SK-N-SH (cell line): ENCODE measurements at regions of chr3 and their contacts with region 1.

Region 1: DNA sequence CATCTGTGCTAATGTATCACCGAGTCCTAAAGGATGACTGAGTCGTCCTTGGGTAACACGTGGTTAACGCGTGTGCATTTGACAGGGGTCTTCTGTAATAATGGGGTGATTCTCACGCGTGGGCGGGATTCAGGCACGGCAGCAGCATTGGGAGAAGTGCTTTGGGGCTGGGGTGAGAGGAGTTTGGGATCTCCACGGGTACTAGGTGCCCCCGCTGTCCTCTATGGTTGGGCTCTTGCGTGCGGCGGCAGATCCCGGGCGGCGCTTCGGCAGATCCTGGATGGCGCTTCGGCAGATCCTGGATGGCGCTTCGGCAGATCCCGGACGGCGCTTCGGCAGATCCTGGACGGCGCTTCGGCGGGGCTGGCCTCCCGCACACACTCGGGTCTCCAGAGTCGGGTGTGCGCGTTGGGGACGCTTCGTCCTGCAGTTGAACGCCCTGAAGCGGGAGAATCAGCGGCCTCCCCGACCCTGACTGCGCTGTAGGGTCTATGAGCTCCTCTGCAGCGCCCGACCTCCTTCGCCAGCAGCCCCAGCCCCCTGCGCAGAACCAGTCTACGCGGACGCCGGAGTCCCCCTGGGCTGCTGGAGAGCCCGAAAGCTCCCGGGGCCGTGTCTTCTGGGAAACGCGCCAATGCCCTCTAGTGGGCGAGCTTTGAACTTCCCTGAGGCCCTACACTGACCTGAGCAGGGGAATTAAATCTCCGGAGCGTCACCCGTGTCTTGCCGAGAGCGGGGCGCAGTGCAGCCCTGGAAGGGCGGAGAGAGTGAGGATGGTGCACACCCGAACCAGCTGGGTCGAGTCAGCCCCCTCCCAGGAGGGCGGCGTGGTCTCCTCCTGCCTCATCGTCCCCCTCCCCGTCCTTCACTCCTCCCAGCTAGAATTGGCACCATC is 48.1 kb upstream of the EPHB3 start:
- DNase-seq: peak; percentile 94
- H3K4me3 ChIP-seq: peak overlapping the region; percentile 33 to 55
- H3K27ac ChIP-seq: no peak overlapping the region
- H3K4me1 ChIP-seq: peaks cover 0 to 7% of the 10 kb centered on the region in 2 experiments; a peak in 1 of 4 replicates
- H3K27me3 ChIP-seq: peaks cover 52% of the 10 kb centered on the region
- CTCF ChIP-seq: peak; percentile 76
- EP300 ChIP-seq: no peak
- RAD21 ChIP-seq: peak; percentile 81

Region 2: GRCh38 chr3:184229394-184230080 is 284.0 kb before region 1 on chr3 and contains the start of gene VWA5B2:
- CTCF ChIA-PET with region 1: no interaction called
- POLR2A ChIA-PET with region 1: no interaction called
- DNase-seq: peak; percentile 99
- H3K4me3 ChIP-seq: peak within 1 kb of the TSS; percentile 50 to 64
- H3K27ac ChIP-seq: no peak within 1 kb of the TSS
- H3K4me1 ChIP-seq: peaks cover 0 to 26% of the 10 kb centered on the region in 2 experiments; a peak in 2 of 4 replicates
- H3K27me3 ChIP-seq: peaks cover 27% of the 10 kb centered on the region
- CTCF ChIP-seq: peak; percentile 21; the same call in 1 of the 2 replicates
- EP300 ChIP-seq: no peak
- RAD21 ChIP-seq: 0 out of 2 replicates have a peak, but pooled peaks have one; percentile 16
- polyA plus RNA-seq, gene VWA5B2: 0.08 and 0.19 TPM in 2 replicates

Region 3: DNA sequence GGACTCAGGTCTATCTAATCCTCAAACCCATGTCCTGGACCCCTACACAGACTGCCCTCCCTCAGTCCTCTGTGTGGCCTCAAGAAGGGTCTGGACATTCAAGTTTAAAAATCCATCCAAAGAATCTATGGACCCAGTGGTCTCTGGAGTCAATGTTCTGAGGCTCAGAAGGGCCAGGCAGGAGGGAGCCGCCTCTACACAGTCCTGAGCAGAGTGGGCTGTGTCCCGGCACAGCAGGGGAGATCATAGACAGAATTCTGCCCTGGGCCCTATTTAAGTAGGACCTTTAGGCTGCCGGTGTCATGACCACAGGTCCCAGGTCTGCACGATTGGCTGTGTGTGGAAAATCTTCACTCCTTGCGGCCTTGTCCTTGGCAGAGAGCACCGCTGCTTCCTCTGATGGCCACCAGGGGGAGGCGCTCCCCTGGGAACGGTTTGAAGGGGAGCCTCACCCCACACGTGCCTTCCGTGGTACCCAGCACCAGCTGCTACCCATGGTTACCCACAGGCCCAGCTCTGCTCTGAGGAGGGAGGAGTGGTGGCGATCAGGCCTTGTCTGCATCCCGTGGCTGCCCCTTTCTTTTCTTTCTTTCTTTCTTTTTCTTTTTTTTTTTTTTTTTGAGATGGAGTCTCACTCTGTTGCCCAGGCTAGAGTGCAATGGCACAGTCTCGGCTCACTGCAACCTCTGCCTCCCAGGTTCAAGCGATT is 95.8 kb before region 1 on chr3:
- CTCF ChIA-PET with region 1: interaction called, 73 read pairs
- POLR2A ChIA-PET with region 1: no interaction called
- DNase-seq: peak; percentile 85
- H3K4me3 ChIP-seq: no peak overlapping the region; a peak in 1 of 4 replicates
- H3K27ac ChIP-seq: no peak overlapping the region
- H3K4me1 ChIP-seq: no peaks in the 10 kb centered on the region; a peak in 1 of 4 replicates
- H3K27me3 ChIP-seq: no peaks in the 10 kb centered on the region
- CTCF ChIP-seq: peak; percentile 94
- EP300 ChIP-seq: no peak
- RAD21 ChIP-seq: peak; percentile 87

Region 4: GRCh38 chr3:184469423-184469822 is 44.1 kb before region 1 on chr3:
- CTCF ChIA-PET with region 1: interaction called, 85 read pairs
- POLR2A ChIA-PET with region 1: interaction called, 3 read pairs
- DNase-seq: peak; percentile 64
- H3K4me3 ChIP-seq: no peak overlapping the region
- H3K27ac ChIP-seq: no peak overlapping the region
- H3K4me1 ChIP-seq: peaks cover 0 to 7% of the 10 kb centered on the region in 2 experiments; a peak in 1 of 4 replicates
- H3K27me3 ChIP-seq: peaks cover 26% of the 10 kb centered on the region; the same call in 1 of the 2 replicates
- CTCF ChIP-seq: peak; percentile 68
- EP300 ChIP-seq: no peak
- RAD21 ChIP-seq: peak; percentile 73

Region 5: GRCh38 chr3:184491867-184492615 is 21.5 kb before region 1 on chr3:
- CTCF ChIA-PET with region 1: interaction called, 21 read pairs
- POLR2A ChIA-PET with region 1: no interaction called
- DNase-seq: no peak
- H3K4me3 ChIP-seq: no peak overlapping the region
- H3K27ac ChIP-seq: no peak overlapping the region
- H3K4me1 ChIP-seq: no peaks in the 10 kb centered on the region
- H3K27me3 ChIP-seq: peaks cover 70% of the 10 kb centered on the region
- CTCF ChIP-seq: no peak
- EP300 ChIP-seq: no peak
- RAD21 ChIP-seq: no peak

Region 6: GRCh38 chr3:184537885-184538599 is 24.5 kb after region 1 on chr3:
- CTCF ChIA-PET with region 1: interaction called, 54 read pairs
- POLR2A ChIA-PET with region 1: no interaction called
- DNase-seq: no peak
- H3K4me3 ChIP-seq: no peak overlapping the region
- H3K27ac ChIP-seq: no peak overlapping the region
- H3K4me1 ChIP-seq: no peaks in the 10 kb centered on the region
- H3K27me3 ChIP-seq: peaks cover 62% of the 10 kb centered on the region
- CTCF ChIP-seq: no peak
- EP300 ChIP-seq: no peak
- RAD21 ChIP-seq: no peak